Activated CD4-positive, alpha-beta memory T cell treated with anti-CD3 and anti-CD28 coated beads, Interleukin-2, amount 10 ng/mL, durations not matched to agents 7 days and 5 days (primary cell): ENCODE measurements at regions of chr20 and their contacts with region 1.

Region 1: GRCh38 chr20:35741892-35742740 is at the start of gene RBM39:
- DNase-seq: peak; percentile 100
- H3K4me3 Mint-ChIP-seq: peak within 1 kb of the TSS; percentile 98
- H3K27ac Mint-ChIP-seq: peak within 1 kb of the TSS; percentile 99
- H3K4me1 Mint-ChIP-seq: peaks cover 43% of the 10 kb centered on the region
- H3K27me3 Mint-ChIP-seq: no peaks in the 10 kb centered on the region
- total RNA-seq, gene RBM39: 318 to 331 TPM

Region 2: GRCh38 chr20:35277531-35278395 is 464.4 kb before region 1 on chr20 and contains the start of gene MMP24OS:
- CTCF ChIA-PET with region 1: no interaction called
- POLR2A ChIA-PET with region 1: interaction called, 10 read pairs
- DNase-seq: peak; percentile 93
- H3K4me3 Mint-ChIP-seq: peak within 1 kb of the TSS; percentile 99
- H3K27ac Mint-ChIP-seq: peak within 1 kb of the TSS; percentile 99
- H3K4me1 Mint-ChIP-seq: peaks cover 35% of the 10 kb centered on the region
- H3K27me3 Mint-ChIP-seq: no peaks in the 10 kb centered on the region
- total RNA-seq, gene MMP24OS: 45.6 to 48.7 TPM

Region 3: DNA sequence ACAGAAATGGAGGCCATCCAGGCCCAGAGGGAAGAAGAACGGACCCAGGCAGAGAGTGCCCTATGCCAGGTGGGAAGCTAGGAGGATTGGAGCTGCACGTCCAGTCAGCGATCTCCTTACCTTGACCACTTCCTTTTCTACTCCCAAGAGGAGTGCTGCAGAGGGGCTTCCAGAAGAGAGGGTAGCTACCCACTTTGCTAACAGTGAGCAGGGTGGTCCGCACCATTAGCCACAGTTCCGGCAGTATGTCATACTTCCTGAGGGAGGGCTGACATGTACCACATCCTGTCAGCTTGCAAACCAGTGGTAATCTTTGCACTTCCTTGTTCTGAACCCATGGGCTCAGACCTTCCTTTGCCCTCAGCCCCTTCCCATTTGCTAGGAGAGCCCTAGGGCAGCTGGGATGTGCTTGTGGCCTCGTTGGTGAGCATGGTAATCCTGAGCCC is 251.4 kb before region 1 on chr20:
- CTCF ChIA-PET with region 1: interaction called, 7 read pairs
- POLR2A ChIA-PET with region 1: interaction called, 37 read pairs
- DNase-seq: peak; percentile 80
- H3K4me3 Mint-ChIP-seq: peak overlapping the region; percentile 97
- H3K27ac Mint-ChIP-seq: peak overlapping the region; percentile 99
- H3K4me1 Mint-ChIP-seq: peaks cover 53% of the 10 kb centered on the region
- H3K27me3 Mint-ChIP-seq: no peaks in the 10 kb centered on the region

Region 4: DNA sequence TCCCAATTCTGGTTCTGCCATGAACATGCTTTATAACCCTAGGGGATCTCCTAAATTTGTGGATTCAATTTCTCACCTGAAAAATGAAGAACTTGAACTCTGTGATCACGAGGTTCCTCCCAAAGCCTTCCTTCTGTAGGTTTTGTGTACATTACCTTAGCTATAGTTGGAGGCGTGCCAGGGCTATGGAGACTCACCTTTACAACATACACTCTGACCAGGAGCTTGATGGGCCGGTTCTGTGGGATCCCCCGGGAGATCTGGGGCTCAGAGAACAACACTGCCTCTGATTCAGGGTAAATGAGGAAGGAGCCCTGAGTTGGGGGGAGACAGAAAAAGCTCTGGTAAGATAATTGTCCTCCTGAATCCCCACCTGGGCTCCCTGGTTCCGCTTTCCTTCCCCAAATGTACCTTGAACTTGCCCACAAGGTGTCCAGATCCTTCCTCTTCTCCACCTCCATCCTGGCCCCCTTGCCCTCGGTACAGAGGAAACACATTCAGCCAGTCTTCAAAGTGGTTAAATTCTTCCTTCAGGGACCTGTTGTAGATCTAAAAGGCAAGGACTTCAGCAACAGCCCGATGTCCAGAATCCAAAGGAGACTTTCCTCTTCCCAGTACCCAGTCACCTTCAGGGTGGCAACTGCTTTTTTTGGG is 166.0 kb before region 1 on chr20:
- CTCF ChIA-PET with region 1: no interaction called
- POLR2A ChIA-PET with region 1: no interaction called
- DNase-seq: no peak
- H3K4me3 Mint-ChIP-seq: no peak overlapping the region
- H3K27ac Mint-ChIP-seq: no peak overlapping the region
- H3K4me1 Mint-ChIP-seq: no peaks in the 10 kb centered on the region
- H3K27me3 Mint-ChIP-seq: peaks cover 2% of the 10 kb centered on the region

Region 5: DNA sequence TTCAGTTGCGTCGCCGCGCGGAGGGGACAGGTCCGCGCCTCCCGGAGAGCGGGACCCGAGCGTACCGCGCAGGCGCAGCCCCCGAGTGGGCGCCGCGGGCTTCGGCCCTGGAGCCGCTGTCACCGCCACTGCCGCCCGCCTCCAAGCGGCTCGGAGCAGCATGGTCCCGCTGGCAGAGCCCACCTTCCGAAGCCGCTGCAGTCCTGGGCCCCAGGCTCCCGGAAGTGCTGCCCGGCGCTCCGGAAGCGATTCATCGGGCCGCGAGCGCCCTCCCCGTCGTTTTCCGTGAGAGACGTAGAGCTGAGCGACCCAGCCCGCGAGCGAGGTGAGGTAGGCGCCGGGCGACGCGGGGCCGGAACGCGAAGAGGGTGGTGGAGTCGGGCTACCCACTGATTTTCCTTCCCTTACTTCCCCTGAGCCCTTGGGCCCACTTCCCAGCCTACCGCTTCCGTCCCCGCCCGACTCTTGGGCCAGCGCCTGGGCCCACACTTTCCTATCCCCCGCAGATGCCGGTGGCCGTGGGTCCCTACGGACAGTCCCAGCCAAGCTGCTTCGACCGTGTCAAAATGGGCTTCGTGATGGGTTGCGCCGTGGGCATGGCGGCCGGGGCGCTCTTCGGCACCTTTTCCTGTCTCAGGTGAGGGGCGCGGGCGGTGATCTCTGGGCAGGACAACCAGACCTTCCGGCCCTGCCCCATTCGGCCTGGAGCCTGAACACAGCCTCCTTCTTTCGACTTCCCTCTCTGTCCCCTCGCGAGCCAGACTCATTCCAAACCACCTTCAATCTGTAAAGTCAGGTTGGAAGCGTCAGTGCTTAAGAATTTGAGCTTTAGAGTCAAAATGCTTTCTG is 42.8 kb before region 1 on chr20 and contains the starts of genes NFS1 and ROMO1:
- CTCF ChIA-PET with region 1: interaction called, 5 read pairs
- POLR2A ChIA-PET with region 1: interaction called, 503 read pairs
- DNase-seq: peak; percentile 87
- H3K4me3 Mint-ChIP-seq: peak within 1 kb of the TSS; percentile 91
- H3K27ac Mint-ChIP-seq: peak within 1 kb of the TSS; percentile 77
- H3K4me1 Mint-ChIP-seq: peaks cover 56% of the 10 kb centered on the region
- H3K27me3 Mint-ChIP-seq: no peaks in the 10 kb centered on the region
- total RNA-seq, gene NFS1: 28.3 to 30.8 TPM
- total RNA-seq, gene ROMO1: 98.4 to 114 TPM

Region 6: DNA sequence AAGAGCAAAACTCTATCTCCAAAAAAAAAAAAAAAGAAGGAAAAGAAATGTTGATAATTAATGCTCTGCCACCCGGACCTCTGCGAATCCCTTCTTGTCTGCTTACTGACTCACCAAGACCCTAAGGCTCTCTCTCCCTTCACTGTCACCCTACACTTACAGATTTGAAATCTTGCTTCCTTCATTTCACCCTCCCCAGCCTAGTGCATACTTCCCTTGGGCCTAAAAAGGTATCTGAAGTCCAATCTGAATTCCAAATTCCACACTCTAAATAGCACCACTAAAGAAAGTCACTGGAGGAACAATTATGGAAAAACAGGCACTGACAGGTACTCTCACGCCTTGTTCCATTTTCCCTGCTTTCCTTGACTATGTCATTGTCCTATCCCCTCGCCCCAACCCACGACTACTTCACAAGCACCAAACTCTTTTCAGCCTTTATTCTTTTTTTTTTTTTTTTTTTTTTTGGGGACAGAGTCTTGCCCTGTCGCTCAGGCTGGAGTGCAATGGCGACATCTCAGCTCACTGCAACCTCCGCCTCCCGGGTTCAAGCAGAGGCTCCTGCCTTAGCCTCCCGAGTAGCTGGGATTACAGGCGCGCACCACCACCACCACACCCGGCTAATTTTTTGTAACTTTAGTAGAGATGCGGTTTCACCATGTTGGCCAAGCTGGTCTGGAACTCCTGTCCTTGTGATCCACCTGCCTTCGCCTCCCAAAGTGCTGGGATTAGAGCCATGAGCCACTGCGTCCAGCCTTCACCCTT is 20.5 kb after region 1 on chr20:
- CTCF ChIA-PET with region 1: interaction called, 71 read pairs
- POLR2A ChIA-PET with region 1: interaction called, 516 read pairs
- DNase-seq: no peak
- H3K4me3 Mint-ChIP-seq: no peak overlapping the region
- H3K27ac Mint-ChIP-seq: no peak overlapping the region
- H3K4me1 Mint-ChIP-seq: peaks cover 13% of the 10 kb centered on the region
- H3K27me3 Mint-ChIP-seq: no peaks in the 10 kb centered on the region

Region 7: DNA sequence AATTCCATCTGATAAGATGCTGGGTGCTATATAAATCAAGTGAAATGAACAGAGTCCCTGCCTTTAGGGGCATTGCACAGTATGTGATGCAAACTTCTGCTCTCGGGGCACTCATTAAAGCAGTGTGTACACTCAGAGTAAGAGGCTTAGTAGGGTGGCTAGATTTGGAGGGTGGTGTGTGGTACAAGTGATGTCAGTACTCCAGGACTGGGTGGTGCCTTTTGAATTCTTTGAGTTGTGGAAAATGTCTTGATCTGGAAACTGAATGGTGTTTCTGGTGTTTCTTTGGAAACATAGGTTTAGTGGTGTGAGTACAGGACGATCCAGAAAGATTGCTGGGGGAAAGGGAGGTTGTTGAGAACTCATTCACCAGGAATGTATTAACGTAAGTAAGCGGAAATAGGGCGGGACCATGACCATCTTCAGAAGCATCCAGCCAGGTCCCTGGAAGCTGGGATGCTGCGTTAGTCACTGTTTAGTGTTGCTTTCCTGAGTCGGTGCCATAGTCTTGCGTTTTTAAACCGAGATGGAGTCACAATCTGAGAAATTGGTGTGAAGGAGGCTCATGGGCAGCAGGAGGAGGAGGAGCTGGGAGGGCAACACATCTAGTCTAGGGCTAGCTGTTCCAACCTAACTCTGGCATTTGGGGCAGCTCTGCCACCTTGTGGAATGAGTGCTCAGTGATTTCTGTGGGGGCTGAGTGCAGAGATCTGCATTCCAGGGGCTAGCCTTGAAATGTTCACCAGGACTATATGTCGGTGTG is 141.8 kb after region 1 on chr20:
- CTCF ChIA-PET with region 1: interaction called, 17 read pairs
- POLR2A ChIA-PET with region 1: interaction called, 23 read pairs
- DNase-seq: peak; percentile 66
- H3K4me3 Mint-ChIP-seq: no peak overlapping the region
- H3K27ac Mint-ChIP-seq: peak overlapping the region; percentile 40
- H3K4me1 Mint-ChIP-seq: peaks cover 13% of the 10 kb centered on the region
- H3K27me3 Mint-ChIP-seq: no peaks in the 10 kb centered on the region